Prostate gland (tissue), 2 donors: ENCODE measurements at regions of chr2 and their contacts with region 1.

Region 1: DNA sequence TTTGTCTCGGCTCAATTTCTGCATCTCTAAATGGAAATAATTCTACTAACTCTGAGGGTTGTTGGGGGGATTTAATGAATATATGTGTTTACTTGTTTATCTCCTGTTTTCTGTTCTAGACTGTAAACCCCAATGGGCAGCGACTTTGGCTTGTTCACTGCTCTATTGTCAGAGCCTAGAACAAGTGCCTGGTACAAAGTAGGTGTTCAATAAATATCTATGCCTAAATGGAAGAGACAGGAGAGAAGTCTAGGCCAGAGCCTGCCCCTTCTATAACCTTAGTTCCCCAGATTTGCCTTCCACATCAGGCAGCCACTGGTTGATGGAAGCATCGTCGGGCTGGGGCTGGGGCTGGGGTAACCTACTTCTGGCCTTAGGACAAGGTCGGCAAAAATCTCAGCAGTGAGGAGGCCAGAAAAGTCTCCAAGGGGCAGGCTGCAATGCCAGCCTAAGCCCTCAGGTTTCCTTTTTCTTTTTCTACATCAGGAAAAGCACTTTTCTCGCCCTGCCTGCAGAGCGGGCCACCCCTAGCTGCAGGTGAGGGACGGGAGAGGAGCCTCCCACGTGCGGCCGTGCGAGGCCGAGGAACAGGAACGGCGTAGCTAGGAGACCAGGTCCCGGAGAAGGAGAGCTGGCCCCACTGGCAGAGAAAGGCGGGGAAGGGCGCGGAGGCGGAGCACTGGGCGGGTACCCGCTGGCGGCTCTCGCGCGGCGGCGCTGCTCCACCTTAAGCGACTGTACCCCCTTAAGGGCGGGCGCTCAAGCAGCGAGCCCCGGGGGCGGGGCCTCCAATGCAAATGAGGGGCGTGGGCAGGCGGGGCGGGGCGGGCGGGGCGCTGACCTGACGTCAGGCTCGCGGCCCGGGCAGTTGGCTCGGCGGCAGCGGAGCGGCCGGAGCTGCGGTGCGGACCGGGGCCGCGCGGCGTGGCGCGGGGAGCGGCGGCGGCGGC is at the start of gene CNNM4:
- DNase-seq: peak; percentile 97
- H3K4me3 ChIP-seq: peak within 1 kb of the TSS; percentile 50 to 66
- H3K27ac ChIP-seq: peak within 1 kb of the TSS; percentile 77 to 78
- H3K4me1 ChIP-seq: peaks cover 6% of the 10 kb centered on the region
- H3K27me3 ChIP-seq: no peaks in the 10 kb centered on the region
- CTCF ChIP-seq: peak in 2 of 4 experiments; percentile 38 to 49
- POLR2A ChIP-seq: peak; percentile 49
- total RNA-seq, gene CNNM4: 9.2 to 13.9 TPM

Region 2: GRCh38 chr2:96359310-96359709 is 401.0 kb before region 1 on chr2:
- intact Hi-C with region 1: no loop called
- DNase-seq: no peak
- H3K4me3 ChIP-seq: no peak overlapping the region
- H3K27ac ChIP-seq: no peak overlapping the region
- H3K4me1 ChIP-seq: no peaks in the 10 kb centered on the region
- H3K27me3 ChIP-seq: no peaks in the 10 kb centered on the region
- CTCF ChIP-seq: peak in 1 of 4 experiments; percentile 13
- POLR2A ChIP-seq: no peak

Region 3: GRCh38 chr2:96527286-96528005 is 232.9 kb before region 1 on chr2:
- intact Hi-C with region 1: loop called (anchors 5 kb)
- DNase-seq: no peak
- H3K4me3 ChIP-seq: peak overlapping the region; percentile 36 to 44
- H3K27ac ChIP-seq: peak overlapping the region; percentile 81 to 84
- H3K4me1 ChIP-seq: peaks cover 2% of the 10 kb centered on the region
- H3K27me3 ChIP-seq: no peaks in the 10 kb centered on the region
- CTCF ChIP-seq: peak in 1 of 4 experiments; percentile 25
- POLR2A ChIP-seq: no peak

Region 4: DNA sequence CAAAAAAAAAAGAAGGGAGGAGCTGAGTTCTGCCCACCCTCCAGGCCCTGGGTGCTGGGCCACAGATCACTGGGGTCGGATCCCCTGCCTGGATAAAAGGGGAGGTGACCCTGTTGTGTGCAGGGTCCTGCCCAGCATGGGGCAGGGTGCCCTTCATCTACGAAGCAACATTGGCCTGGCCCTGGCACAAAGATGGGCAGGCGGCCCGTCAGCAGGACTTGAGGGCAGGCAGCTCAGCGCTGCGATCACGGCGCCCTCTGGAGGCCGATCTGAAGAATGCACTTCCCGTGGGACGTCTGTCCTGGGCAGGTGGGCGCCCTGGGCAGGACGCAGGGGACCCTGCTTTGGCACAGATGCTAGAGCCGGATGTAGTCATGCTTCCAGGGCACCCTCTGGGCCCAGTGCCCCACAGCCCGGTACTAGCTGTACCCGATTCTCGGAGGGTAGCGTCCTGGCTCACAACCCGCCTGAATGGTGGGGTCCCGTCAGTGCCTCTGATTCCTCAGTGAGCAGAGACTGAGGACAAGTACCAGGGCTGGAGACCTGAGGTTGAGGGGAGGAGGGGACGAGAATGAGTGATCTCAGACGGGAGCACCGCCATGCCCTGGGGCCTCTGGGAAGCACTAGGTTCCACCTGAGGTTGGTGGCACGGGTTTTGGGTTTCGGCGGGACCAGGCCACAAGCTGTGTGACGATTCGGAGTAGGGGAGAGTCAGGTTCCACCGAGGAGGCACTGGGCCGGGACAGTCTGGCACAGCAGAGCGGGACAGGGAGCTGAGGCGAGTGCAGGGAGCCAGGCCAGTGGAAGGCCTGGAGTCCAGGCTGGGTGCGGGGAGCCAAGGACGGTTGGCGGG is 205.8 kb before region 1 on chr2:
- intact Hi-C with region 1: loop called (anchors 5 kb)
- DNase-seq: peak; percentile 57
- H3K4me3 ChIP-seq: no peak overlapping the region
- H3K27ac ChIP-seq: no peak overlapping the region
- H3K4me1 ChIP-seq: no peaks in the 10 kb centered on the region
- H3K27me3 ChIP-seq: no peaks in the 10 kb centered on the region
- CTCF ChIP-seq: peak; percentile 87 to 95 (median 89)
- POLR2A ChIP-seq: no peak

Region 5: GRCh38 chr2:96638144-96639121 is 121.9 kb before region 1 on chr2 and contains the start of gene KANSL3:
- intact Hi-C with region 1: loop called (anchors 1 kb)
- DNase-seq: peak; percentile 85
- H3K4me3 ChIP-seq: peak within 1 kb of the TSS; percentile 82 to 89
- H3K27ac ChIP-seq: peak within 1 kb of the TSS; percentile 92 to 96
- H3K4me1 ChIP-seq: no peaks in the 10 kb centered on the region
- H3K27me3 ChIP-seq: no peaks in the 10 kb centered on the region
- CTCF ChIP-seq: peak in 2 of 4 experiments; percentile 19 to 39
- POLR2A ChIP-seq: peak; percentile 91
- total RNA-seq, gene KANSL3: 41.3 to 70.0 TPM

Region 6: GRCh38 chr2:96739633-96740428 is 20.5 kb before region 1 on chr2 and contains the start of gene LMAN2L:
- intact Hi-C with region 1: loop called (anchors 1 kb)
- DNase-seq: peak; percentile 97
- H3K4me3 ChIP-seq: peak within 1 kb of the TSS; percentile 65 to 67
- H3K27ac ChIP-seq: peak within 1 kb of the TSS; percentile 57 to 68
- H3K4me1 ChIP-seq: peaks cover 6% of the 10 kb centered on the region
- H3K27me3 ChIP-seq: no peaks in the 10 kb centered on the region
- CTCF ChIP-seq: peak in 2 of 4 experiments; percentile 28 to 44
- POLR2A ChIP-seq: peak; percentile 67
- total RNA-seq, gene LMAN2L: 26.1 to 26.8 TPM

Region 7: DNA sequence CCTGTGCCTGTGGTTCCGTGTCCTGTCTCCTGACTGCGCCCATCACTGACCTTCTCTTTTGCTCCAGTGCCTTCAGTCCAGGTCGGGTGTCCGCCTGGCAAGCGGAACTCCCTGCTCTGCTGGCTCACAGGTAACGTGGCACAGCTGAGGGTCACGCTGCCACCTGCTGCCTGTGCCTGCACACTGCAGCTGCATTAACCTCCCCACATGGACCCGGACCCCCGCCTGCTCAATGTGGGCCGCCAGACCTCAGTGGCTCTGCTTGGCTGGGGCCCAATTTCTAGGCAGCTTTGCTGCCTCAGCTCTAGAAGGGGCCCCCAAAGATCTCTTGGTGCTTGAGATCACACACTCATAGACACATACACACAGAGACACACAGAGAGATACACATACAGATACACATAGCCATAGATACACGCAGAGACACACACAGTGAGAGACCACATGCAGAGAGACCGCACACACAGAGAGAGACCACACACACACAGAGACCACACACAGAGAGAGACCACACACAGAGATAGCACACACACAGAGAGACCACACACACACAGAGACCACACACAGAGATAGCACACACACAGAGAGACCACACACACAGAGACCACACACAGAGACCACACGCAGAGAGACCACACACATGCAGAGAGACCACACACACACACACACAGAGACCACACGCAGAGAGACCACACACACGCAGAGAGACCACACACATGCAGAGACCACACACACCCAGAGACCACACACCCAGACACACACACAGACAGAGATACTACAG is 40.9 kb after region 1 on chr2:
- intact Hi-C with region 1: loop called (anchors 5 kb)
- DNase-seq: peak; percentile 83
- H3K4me3 ChIP-seq: no peak overlapping the region
- H3K27ac ChIP-seq: no peak overlapping the region
- H3K4me1 ChIP-seq: no peaks in the 10 kb centered on the region
- H3K27me3 ChIP-seq: no peaks in the 10 kb centered on the region
- CTCF ChIP-seq: peak; percentile 75 to 95 (median 84)
- POLR2A ChIP-seq: no peak